Ascending aorta (tissue), 2 donors: ENCODE measurements at regions of chr10 and their contacts with region 1.

Region 1: DNA sequence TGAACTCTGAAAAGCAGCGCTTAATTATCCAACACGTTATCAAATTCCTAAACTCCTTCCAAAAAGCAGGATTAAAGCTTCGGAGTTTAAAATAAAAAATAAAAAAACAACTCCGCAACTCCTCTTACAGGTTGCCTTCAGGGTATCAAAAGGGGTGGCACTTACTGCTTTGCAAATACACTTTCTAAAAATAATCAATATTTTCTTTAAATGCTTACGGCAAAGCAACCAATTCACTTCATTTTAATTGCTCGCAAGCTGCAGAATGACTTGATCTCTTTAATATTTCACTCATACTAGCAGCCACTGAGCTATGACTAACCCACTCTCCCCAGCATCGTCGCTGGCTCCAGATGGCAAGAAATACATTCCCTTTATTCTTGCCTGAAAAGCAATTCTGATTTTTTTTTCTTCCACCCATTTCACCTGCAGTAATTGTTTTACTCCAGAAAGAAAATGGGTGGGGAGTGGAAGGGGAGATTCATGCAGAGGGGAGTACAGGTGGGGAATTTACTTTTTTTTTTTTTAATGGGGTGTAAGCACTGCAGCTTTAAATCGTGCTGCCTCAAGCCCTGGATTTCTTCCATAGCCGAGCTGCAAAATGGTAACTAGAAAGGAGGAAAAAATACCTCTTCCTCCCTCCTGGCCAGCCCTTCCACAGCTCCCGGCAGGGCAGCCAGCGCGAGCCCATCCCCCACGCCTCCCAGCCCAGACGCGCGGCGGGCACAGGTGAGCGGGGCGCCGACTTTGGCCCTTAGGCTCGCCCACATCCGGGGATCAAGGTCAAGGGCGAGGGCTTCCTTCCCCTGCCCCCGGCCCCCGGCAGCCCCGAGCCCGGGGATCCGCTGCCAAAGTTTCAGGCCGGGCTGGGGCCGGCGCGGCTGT is 54.2 kb upstream of the FHIP2A start:
- DNase-seq: no peak
- H3K4me3 ChIP-seq: peak overlapping the region; percentile 83 to 84
- H3K27ac ChIP-seq: peak overlapping the region; percentile 48 to 49
- H3K4me1 ChIP-seq: peaks cover 4 to 8% of the 10 kb centered on the region in 2 donors
- H3K27me3 ChIP-seq: no peaks in the 10 kb centered on the region
- CTCF ChIP-seq: no peak

Region 2: GRCh38 chr10:114638821-114639625 is 128.3 kb before region 1 on chr10:
- intact Hi-C with region 1: loop called (anchors 5 kb)
- DNase-seq: no peak
- H3K4me3 ChIP-seq: no peak overlapping the region
- H3K27ac ChIP-seq: no peak overlapping the region
- H3K4me1 ChIP-seq: peaks cover 0 to 9% of the 10 kb centered on the region in 2 donors
- H3K27me3 ChIP-seq: no peaks in the 10 kb centered on the region
- CTCF ChIP-seq: no peak

Region 3: DNA sequence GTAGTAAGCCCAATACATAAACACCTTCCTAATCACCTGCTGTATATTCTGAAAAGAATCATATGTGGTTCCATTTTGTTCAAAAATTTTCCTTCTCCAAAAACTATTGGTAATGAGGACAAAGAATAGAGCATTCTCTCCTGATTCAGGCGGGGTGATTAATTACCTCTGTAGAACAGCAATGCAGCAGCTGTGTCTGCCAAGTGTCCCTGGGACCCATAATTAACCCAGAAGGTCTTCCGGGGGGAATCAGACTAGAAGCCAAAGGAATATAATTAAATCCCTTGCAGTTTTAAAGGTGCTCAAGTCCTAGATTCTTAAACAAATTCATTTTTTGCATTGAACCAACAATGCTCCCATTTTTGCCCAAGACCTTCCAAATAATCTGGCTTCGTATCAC is 49.0 kb before region 1 on chr10:
- intact Hi-C with region 1: no loop called
- DNase-seq: no peak
- H3K4me3 ChIP-seq: no peak overlapping the region
- H3K27ac ChIP-seq: no peak overlapping the region
- H3K4me1 ChIP-seq: peaks cover 9 to 27% of the 10 kb centered on the region in 2 donors
- H3K27me3 ChIP-seq: no peaks in the 10 kb centered on the region
- CTCF ChIP-seq: no peak

Region 4: GRCh38 chr10:114729103-114729659 is 38.2 kb before region 1 on chr10:
- intact Hi-C with region 1: no loop called
- DNase-seq: no peak
- H3K4me3 ChIP-seq: no peak overlapping the region
- H3K27ac ChIP-seq: no peak overlapping the region
- H3K4me1 ChIP-seq: no peaks in the 10 kb centered on the region
- H3K27me3 ChIP-seq: no peaks in the 10 kb centered on the region
- CTCF ChIP-seq: no peak

Region 5: DNA sequence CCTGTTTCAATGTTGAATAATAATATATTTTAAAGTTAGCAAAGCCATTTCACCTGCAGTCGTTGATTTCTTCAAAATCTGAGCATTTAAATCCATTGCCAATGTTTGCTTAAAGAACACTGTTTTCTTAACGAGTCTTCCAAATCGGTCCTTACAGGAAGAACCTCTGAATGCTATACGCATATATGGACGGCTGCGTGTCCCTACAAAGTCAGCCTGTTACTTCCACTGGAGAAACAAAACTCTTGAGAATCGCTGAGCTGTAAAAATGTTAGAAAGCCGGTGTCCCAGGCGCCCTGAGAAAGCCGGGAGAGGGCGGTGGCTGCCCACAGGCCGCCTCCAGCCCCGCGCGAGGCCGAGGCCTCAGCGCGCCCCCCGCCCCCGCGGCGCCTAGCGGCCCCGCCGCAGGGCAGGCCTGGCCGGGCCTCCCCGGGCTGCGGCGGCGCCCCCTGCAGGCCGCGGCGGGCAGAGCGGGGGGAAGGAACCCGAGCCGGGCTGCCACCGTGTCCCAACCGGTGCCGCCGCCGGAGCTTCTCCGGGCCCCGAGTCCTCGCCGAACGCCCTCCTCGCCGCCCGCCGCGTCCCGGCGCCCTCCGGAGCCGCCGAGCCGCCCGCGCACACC is 54.1 kb after region 1 on chr10 and contains the start of gene FHIP2A:
- intact Hi-C with region 1: loop called (anchors 5 kb)
- DNase-seq: peak; percentile 43 to 87
- H3K4me3 ChIP-seq: peak within 1 kb of the TSS; percentile 99
- H3K27ac ChIP-seq: peak within 1 kb of the TSS; percentile 94 to 100
- H3K4me1 ChIP-seq: peaks cover 3 to 17% of the 10 kb centered on the region in 2 donors
- H3K27me3 ChIP-seq: no peaks in the 10 kb centered on the region
- CTCF ChIP-seq: peak; percentile 14 to 88 (median 35)
- total RNA-seq, gene FHIP2A: 19.6 TPM